ENCODE measurements at regions of chr9 and their contacts with region 1.

Region 1: DNA sequence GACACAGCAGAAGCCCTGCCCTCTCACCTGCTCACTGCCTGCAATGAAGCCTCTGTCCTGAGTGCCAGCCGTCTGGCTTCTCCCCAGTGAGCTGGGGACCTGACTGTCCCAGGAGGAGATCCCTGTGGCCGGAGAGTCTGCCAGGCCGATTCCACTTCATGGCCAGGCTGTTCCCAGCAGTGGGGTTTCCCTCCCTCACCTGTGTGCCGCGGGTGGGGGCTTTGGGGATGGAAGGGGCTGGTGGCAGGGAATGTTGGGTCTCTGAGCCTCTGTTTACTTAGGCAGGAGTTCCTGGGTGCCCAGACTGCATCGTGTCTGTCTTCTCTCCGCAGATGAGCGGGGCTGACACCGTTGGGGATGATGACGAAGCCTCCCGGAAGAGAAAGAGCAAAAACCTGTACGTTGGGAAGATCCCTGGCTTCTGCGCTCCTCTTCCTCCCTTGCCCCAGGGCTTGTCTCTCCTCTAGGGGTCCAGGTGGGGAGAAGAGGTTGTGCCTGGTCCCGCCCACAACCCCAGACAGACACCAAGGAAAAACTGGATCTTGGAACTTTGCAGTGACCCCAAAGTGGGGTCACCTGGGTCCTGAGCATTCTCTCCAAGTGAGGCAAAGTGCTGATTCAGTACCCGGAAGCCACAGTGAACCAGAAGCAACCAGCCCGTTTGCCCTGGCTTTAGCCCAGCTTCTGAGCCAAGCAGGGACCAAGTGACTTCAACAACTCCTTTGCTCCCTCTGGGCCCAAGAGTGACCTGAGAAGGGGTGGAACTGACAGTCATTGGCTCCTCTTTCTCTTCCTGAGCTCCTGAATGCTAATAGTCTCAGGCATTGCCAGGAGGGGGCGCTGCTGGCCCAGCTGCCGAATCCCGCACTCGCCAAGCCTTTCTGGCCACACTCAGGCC is 127.7 kb downstream of the RGS3 start:
- DNase-seq: peak; percentile 61 to 80
- ATAC-seq: peak; percentile 77
- H3K4me3 ChIP-seq: no peak overlapping the region
- H3K27ac ChIP-seq: peak overlapping the region; percentile 49 to 77 (median 69)
- H3K4me1 ChIP-seq: peaks cover 28 to 59% of the 10 kb centered on the region in 2 donors
- H3K27me3 ChIP-seq: no peaks in the 10 kb centered on the region
- CTCF ChIP-seq: peak; percentile 91 to 96 (median 93)
- POLR2A ChIP-seq: no peak

Region 2: GRCh38 chr9:112939418-112939817 is 651.8 kb before region 1 on chr9:
- in situ Hi-C with region 1: no loop called
- intact Hi-C with region 1: no loop called
- DNase-seq: no peak
- ATAC-seq: no peak
- H3K4me3 ChIP-seq: no peak overlapping the region
- H3K27ac ChIP-seq: no peak overlapping the region
- H3K4me1 ChIP-seq: no peaks in the 10 kb centered on the region
- H3K27me3 ChIP-seq: no peaks in the 10 kb centered on the region
- CTCF ChIP-seq: no peak
- POLR2A ChIP-seq: no peak

Region 3: DNA sequence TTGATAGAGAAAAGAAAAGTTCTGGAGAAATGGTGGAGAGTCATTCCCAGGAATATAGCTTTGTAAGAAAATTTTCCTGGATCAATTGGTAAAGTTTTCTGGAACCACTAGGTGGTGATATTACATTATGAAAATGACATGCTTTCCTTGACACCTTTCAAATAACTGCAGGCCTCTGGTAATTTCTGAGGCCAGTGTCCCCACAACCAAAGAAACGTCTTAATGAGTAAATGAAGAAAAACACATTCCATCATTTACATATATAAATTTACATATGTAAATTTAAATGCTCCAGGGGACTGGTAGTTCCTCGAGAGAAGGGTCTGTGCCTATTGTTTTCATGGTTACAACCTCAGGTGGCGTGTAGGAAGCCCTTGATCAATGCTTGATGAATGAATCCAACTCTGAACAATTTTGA is 144.9 kb before region 1 on chr9:
- in situ Hi-C with region 1: loop called (anchors 5 to 10 kb)
- intact Hi-C with region 1: no loop called
- DNase-seq: no peak
- ATAC-seq: peak; percentile 65 to 90
- H3K4me3 ChIP-seq: no peak overlapping the region
- H3K27ac ChIP-seq: peak overlapping the region in 1 of 4 donors; percentile 27
- H3K4me1 ChIP-seq: no peaks in the 10 kb centered on the region
- H3K27me3 ChIP-seq: no peaks in the 10 kb centered on the region
- CTCF ChIP-seq: peak; percentile 68 to 77 (median 71)
- POLR2A ChIP-seq: no peak

Region 4: GRCh38 chr9:113620377-113621161 is 29.3 kb after region 1 on chr9:
- in situ Hi-C with region 1: no loop called
- intact Hi-C with region 1: loop called (anchors 2 kb)
- DNase-seq: peak in 1 of 2 donors; percentile 41
- ATAC-seq: peak; percentile 34 to 51
- H3K4me3 ChIP-seq: no peak overlapping the region
- H3K27ac ChIP-seq: peak overlapping the region; percentile 50 to 74 (median 68)
- H3K4me1 ChIP-seq: peaks cover 28 to 33% of the 10 kb centered on the region in 2 donors
- H3K27me3 ChIP-seq: no peaks in the 10 kb centered on the region
- CTCF ChIP-seq: no peak
- POLR2A ChIP-seq: no peak

Region 5: DNA sequence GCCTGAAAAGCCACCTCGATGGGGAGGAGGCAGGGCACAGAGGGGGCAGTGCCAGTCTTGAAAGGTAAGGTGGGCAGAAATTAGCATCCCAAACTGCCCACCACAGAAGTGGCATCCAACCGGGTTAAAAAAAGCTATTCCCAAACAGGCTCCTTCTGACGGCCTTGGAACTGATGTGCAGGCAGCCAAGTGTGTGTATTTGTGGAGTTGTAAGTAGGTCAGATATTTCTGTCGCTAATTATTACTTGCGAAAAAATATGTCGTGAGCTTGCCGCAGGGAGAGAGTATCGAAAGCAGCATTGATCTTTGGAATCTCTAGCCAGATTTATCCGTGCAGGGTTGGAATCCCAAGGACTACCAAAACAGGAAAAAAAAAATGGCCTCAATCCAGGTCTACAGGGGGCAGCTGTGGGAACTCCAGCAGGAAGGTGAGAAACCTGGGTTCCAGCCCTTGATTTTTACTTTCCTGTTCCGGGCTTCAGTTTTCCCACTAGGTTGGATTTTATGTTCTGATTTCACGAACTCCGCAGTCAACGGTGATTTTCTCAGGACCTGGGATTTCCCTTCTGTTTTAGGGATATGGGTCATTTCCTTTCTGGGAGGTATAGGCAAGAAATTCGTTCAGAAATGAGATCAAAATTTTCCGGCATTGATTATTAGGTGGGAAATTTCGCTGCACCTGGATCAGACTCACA is 73.1 kb after region 1 on chr9:
- in situ Hi-C with region 1: loop called (anchors 5 kb)
- intact Hi-C with region 1: no loop called
- DNase-seq: no peak
- ATAC-seq: no peak
- H3K4me3 ChIP-seq: no peak overlapping the region
- H3K27ac ChIP-seq: no peak overlapping the region
- H3K4me1 ChIP-seq: peaks cover 0 to 13% of the 10 kb centered on the region in 2 donors
- H3K27me3 ChIP-seq: no peaks in the 10 kb centered on the region
- CTCF ChIP-seq: no peak
- POLR2A ChIP-seq: no peak

Measured in gastrocnemius medialis (tissue), 4 donors.